CD14-positive monocyte (primary cell): ENCODE measurements at regions of chr22 and their contacts with region 1.

Region 1: DNA sequence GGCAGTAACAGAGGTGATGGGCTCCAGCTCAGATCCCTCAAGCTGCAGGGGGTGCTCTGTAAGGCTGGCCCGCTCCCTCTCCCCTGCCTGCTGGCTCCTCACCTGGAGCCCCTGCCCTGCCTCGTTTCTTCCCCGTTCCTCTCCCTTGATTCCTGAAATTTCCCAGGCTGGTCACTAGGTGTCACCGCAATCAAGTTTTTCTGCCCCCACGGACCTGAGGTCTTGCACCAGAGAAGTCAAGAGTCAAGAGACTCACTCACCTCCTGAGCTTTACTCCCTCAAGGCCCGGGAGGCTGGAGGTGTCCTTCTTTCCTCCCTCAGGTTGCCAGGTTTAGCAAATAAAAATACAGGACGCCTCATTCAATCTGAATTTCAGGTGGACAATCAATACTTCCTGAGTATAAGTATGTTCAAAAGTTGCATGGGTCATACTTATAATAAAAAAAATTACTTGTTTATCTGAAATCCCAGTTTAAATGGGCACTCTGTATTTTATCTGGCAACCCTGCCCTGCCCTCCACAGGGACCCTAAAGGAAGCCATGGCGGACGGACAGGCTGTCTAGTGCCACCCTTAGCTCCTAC is 69.2 kb downstream of the SCUBE1 start:
- DNase-seq: peak; percentile 34 to 69 (median 50)
- H3K4me3 ChIP-seq: no peak overlapping the region
- H3K4me3 Mint-ChIP-seq: no peak overlapping the region
- H3K27ac ChIP-seq: no peak overlapping the region
- H3K27ac Mint-ChIP-seq: no peak overlapping the region
- H3K4me1 ChIP-seq: peaks cover 0 to 9% of the 10 kb centered on the region in 2 donors
- H3K4me1 Mint-ChIP-seq: peaks cover 8% of the 10 kb centered on the region
- H3K27me3 ChIP-seq: no peaks in the 10 kb centered on the region
- H3K27me3 Mint-ChIP-seq: peaks cover 0 to 3% (median 2%) of the 10 kb centered on the region in 3 donors
- CTCF ChIP-seq: peak; percentile 71

Region 2: DNA sequence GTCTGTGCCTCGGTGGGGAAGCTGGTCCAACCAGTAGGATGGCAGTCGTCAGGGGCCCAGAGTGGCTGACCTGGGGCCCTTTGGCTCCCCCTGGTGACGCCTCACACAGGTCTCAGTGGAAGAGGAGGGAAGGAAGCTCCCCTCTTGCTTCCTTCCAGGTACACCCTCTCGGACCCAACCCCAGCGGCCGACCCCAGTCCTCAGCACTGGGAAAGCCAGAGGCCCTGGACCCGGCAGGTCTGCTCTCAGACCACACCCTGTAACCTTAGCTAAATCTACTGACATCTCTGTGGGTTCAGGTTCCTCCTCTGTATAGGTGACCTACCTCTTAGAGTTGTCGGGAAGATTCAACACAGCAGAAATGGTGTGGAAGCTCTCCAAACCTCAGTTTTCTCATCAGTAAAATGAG is 72.5 kb after region 1 on chr22:
- intact Hi-C with region 1: loop called (anchors 5 to 10 kb)
- DNase-seq: peak; percentile 22 to 52 (median 52)
- H3K4me3 ChIP-seq: peak overlapping the region in 1 of 3 experiments; percentile 41
- H3K4me3 Mint-ChIP-seq: peak overlapping the region in 1 of 2 donors; percentile 86
- H3K27ac ChIP-seq: peak overlapping the region in 1 of 2 donors; percentile 10
- H3K27ac Mint-ChIP-seq: peak overlapping the region in 4 of 7 donors; percentile 4 to 91 (median 69)
- H3K4me1 ChIP-seq: peaks cover 49 to 58% of the 10 kb centered on the region in 2 donors
- H3K4me1 Mint-ChIP-seq: peaks cover 53% of the 10 kb centered on the region
- H3K27me3 ChIP-seq: peaks cover 8 to 22% of the 10 kb centered on the region in 2 donors
- H3K27me3 Mint-ChIP-seq: peaks cover 20 to 27% (median 26%) of the 10 kb centered on the region in 3 donors
- CTCF ChIP-seq: peak; percentile 84

Region 3: GRCh38 chr22:43385770-43386641 is 112.0 kb after region 1 on chr22:
- intact Hi-C with region 1: loop called (anchors 2 kb)
- DNase-seq: peak; percentile 59 to 74 (median 61)
- H3K4me3 ChIP-seq: peak overlapping the region in 1 of 3 experiments; percentile 23
- H3K4me3 Mint-ChIP-seq: peak overlapping the region in 1 of 2 donors; percentile 67
- H3K27ac ChIP-seq: no peak overlapping the region
- H3K27ac Mint-ChIP-seq: no peak overlapping the region
- H3K4me1 ChIP-seq: peaks cover 6 to 14% of the 10 kb centered on the region in 2 donors
- H3K4me1 Mint-ChIP-seq: peaks cover 14% of the 10 kb centered on the region
- H3K27me3 ChIP-seq: no peaks in the 10 kb centered on the region
- H3K27me3 Mint-ChIP-seq: peaks cover 15 to 24% (median 18%) of the 10 kb centered on the region in 3 donors
- CTCF ChIP-seq: peak; percentile 92